Right ventricle myocardium inferior (tissue), 1 donor: ENCODE measurements at regions of chr9 and their contacts with region 1.

Region 1: GRCh38 chr9:99563364-99563763 is 258.3 kb upstream of the NR4A3 start:
- DNase-seq: no peak
- ATAC-seq: no peak

Region 2: GRCh38 chr9:99356512-99356971 is 206.8 kb before region 1 on chr9:
- intact Hi-C with region 1: loop called (anchors 2 kb)
- DNase-seq: peak; percentile 81
- ATAC-seq: peak; percentile 71